Activated CD8-positive, alpha-beta memory T cell treated with anti-CD3 and anti-CD28 coated beads, Interleukin-2, amount 10 ng/mL, durations not matched to agents 7 days and 5 days (primary cell): ENCODE measurements at regions of chr19 and their contacts with region 1.

Region 1: GRCh38 chr19:45079063-45079910 is at the start of gene GEMIN7:
- DNase-seq: peak; percentile 83
- ATAC-seq: peak; percentile 55
- H3K4me3 Mint-ChIP-seq: peak within 1 kb of the TSS; percentile 96
- H3K27ac Mint-ChIP-seq: peak within 1 kb of the TSS; percentile 83
- H3K4me1 Mint-ChIP-seq: peaks cover 54% of the 10 kb centered on the region
- H3K27me3 Mint-ChIP-seq: no peaks in the 10 kb centered on the region
- total RNA-seq, gene GEMIN7: 26.2 to 34.4 TPM

Region 2: DNA sequence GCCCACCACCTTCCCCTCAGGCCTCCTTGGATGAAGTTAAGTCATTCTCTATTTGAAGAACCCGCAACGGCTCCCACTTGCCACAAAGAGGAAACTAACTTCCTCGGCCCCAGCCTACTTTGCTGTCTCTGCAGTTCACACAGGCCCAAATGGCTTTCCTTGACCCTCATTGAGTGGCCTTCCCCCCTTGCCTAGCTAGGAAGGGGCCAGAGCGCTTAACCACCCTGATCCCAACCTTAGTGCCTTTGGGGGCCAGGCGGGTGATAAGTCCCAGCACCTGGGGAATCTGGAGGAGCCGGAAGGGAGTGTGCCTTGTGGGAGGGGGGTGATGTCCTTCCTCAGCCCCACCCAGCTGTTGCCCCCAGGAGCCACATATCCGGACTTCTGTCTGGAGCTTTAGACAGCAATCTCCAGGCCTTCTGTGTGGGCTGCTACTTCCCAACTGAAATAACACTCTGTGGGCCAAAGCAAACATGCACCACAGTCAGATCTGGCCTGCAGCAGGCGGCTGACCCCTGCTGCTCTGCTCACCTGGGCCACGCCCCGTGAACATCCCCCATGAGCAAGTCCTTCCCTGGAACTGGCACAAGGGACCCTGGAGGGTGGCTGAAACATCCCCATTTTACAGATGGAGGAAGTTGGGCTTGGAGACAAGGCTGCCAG is 222.7 kb before region 1 on chr19:
- CTCF ChIA-PET with region 1: no interaction called
- DNase-seq: no peak
- ATAC-seq: no peak
- H3K4me3 Mint-ChIP-seq: no peak overlapping the region
- H3K27ac Mint-ChIP-seq: no peak overlapping the region
- H3K4me1 Mint-ChIP-seq: peaks cover 4% of the 10 kb centered on the region
- H3K27me3 Mint-ChIP-seq: peaks cover 7% of the 10 kb centered on the region

Region 3: DNA sequence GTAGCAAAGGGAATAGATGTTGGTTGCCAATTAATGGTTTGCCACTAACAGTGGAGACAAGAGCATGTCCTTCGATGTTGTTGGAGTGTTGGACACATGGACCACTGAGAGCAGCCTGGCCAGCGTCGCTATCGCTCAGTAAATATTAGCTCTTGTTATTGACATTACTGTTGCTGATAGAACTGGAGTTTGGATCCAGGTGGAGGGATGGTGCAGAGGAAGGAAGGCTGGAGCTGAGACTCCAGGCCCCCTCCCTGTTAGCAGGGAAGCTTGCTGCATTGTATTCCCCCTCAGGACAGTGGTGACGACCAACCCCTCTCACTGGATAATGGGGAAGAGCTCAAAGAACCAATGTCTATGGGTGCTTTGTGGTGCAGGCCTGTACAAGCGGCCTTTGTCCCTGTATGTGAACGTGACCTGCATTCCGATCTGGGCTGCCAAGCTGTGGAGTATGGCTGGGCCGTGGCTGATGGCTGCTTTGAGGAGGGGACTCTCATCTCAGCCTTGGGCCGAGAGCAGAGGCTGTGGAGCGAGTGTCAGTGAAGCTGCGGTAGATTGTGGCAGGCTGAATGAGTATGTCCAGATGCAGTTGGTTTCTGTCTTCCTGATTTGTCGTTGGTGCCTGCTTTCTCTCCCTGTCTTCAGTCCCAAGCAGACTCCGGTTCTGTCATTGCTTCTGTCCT is 33.5 kb before region 1 on chr19:
- CTCF ChIA-PET with region 1: no interaction called
- DNase-seq: no peak
- ATAC-seq: no peak
- H3K4me3 Mint-ChIP-seq: no peak overlapping the region
- H3K27ac Mint-ChIP-seq: no peak overlapping the region
- H3K4me1 Mint-ChIP-seq: peaks cover 43% of the 10 kb centered on the region
- H3K27me3 Mint-ChIP-seq: no peaks in the 10 kb centered on the region

Region 4: GRCh38 chr19:45092747-45093678 is 13.7 kb after region 1 on chr19 and contains the start of gene PPP1R37:
- CTCF ChIA-PET with region 1: interaction called, 12 read pairs
- DNase-seq: peak; percentile 94
- ATAC-seq: peak; percentile 84
- H3K4me3 Mint-ChIP-seq: peak within 1 kb of the TSS; percentile 88
- H3K27ac Mint-ChIP-seq: peak within 1 kb of the TSS; percentile 95
- H3K4me1 Mint-ChIP-seq: peaks cover 67% of the 10 kb centered on the region
- H3K27me3 Mint-ChIP-seq: no peaks in the 10 kb centered on the region
- total RNA-seq, gene PPP1R37: 18.7 to 30.0 TPM